T-cell (primary cell): ENCODE measurements at regions of chr3 and their contacts with region 1.

Region 1: GRCh38 chr3:122383771-122384697 is at the start of gene FAM162A:
- DNase-seq: peak; percentile 84 to 97 (median 91)
- ATAC-seq: peak; percentile 95 to 98 (median 98)
- H3K4me3 ChIP-seq: peak within 1 kb of the TSS; percentile 90 to 94
- H3K4me3 Mint-ChIP-seq: peak within 1 kb of the TSS; percentile 91 to 92 (median 92)
- H3K27ac ChIP-seq: peak within 1 kb of the TSS; percentile 82
- H3K27ac Mint-ChIP-seq: peak within 1 kb of the TSS; percentile 93 to 95
- H3K4me1 ChIP-seq: peaks cover 15 to 18% of the 10 kb centered on the region in 2 experiments
- H3K4me1 Mint-ChIP-seq: peaks cover 45 to 55% (median 53%) of the 10 kb centered on the region in 3 donors
- H3K27me3 ChIP-seq: no peaks in the 10 kb centered on the region
- H3K27me3 Mint-ChIP-seq: no peaks in the 10 kb centered on the region
- total RNA-seq, gene FAM162A: 26.6 to 29.6 (median 28.1) TPM

Region 2: DNA sequence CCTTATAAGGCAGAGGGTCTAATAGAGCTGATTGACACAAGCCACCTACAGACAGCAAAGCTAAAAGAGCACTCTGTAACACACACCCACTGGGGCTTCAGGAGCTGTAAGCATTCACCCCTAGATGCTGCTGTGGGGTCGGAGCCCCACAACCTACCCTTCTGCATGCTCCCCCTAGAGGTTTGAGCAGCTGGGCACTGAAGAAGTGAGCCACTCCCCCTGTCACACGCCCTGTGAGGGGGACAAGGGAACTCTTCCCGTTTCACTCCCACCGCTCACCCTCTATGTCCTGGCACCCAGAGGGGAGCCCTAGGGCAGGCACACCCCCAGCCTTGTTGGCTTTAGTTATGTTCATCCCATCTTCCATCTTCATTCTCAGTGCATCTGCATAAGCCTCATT is 68.4 kb before region 1 on chr3:
- CTCF ChIA-PET with region 1: no interaction called
- POLR2A ChIA-PET with region 1: no interaction called
- DNase-seq: no peak
- ATAC-seq: no peak
- H3K4me3 ChIP-seq: no peak overlapping the region
- H3K4me3 Mint-ChIP-seq: no peak overlapping the region
- H3K27ac ChIP-seq: no peak overlapping the region
- H3K27ac Mint-ChIP-seq: no peak overlapping the region
- H3K4me1 ChIP-seq: no peaks in the 10 kb centered on the region
- H3K4me1 Mint-ChIP-seq: peaks cover 7 to 12% (median 8%) of the 10 kb centered on the region in 3 donors
- H3K27me3 ChIP-seq: peaks cover 0 to 5% of the 10 kb centered on the region in 2 experiments
- H3K27me3 Mint-ChIP-seq: peaks cover 0 to 3% of the 10 kb centered on the region in 2 donors

Region 3: GRCh38 chr3:122343654-122344053 is 40.4 kb before region 1 on chr3:
- CTCF ChIA-PET with region 1: no interaction called
- POLR2A ChIA-PET with region 1: no interaction called
- DNase-seq: no peak
- ATAC-seq: no peak
- H3K4me3 ChIP-seq: no peak overlapping the region
- H3K4me3 Mint-ChIP-seq: no peak overlapping the region
- H3K27ac ChIP-seq: no peak overlapping the region
- H3K27ac Mint-ChIP-seq: no peak overlapping the region
- H3K4me1 ChIP-seq: no peaks in the 10 kb centered on the region
- H3K4me1 Mint-ChIP-seq: no peaks in the 10 kb centered on the region
- H3K27me3 ChIP-seq: peaks cover 0 to 9% of the 10 kb centered on the region in 2 experiments
- H3K27me3 Mint-ChIP-seq: peaks cover 4 to 6% of the 10 kb centered on the region in 2 donors

Region 4: DNA sequence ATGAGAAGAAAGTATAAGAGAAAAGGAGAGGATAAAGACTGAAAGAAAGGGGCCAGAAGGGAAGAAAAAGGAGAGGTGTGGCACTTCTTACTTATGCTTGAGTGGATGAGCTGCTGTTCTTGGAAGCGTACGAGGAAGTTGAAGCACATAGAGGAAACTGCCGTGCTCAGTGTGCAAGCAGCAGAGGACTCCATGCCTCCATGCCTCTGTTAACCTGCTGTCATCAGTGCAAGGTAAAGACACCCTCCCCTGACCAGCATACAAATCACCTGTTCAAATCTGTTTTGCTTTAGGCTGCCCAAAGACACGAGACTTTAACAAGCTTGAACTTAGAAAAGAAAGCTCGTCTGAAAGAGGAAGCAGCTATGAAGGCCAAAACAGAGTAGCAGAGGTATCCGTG is 25.4 kb after region 1 on chr3:
- CTCF ChIA-PET with region 1: interaction called, 5 to 59 read pairs
- POLR2A ChIA-PET with region 1: interaction called in 1 of 2 experiments, 5 read pairs
- DNase-seq: no peak
- ATAC-seq: no peak
- H3K4me3 ChIP-seq: no peak overlapping the region
- H3K4me3 Mint-ChIP-seq: no peak overlapping the region
- H3K27ac ChIP-seq: no peak overlapping the region
- H3K27ac Mint-ChIP-seq: peak overlapping the region; percentile 8 to 9
- H3K4me1 ChIP-seq: no peaks in the 10 kb centered on the region
- H3K4me1 Mint-ChIP-seq: peaks cover 22 to 33% (median 32%) of the 10 kb centered on the region in 3 donors
- H3K27me3 ChIP-seq: no peaks in the 10 kb centered on the region
- H3K27me3 Mint-ChIP-seq: no peaks in the 10 kb centered on the region

Region 5: DNA sequence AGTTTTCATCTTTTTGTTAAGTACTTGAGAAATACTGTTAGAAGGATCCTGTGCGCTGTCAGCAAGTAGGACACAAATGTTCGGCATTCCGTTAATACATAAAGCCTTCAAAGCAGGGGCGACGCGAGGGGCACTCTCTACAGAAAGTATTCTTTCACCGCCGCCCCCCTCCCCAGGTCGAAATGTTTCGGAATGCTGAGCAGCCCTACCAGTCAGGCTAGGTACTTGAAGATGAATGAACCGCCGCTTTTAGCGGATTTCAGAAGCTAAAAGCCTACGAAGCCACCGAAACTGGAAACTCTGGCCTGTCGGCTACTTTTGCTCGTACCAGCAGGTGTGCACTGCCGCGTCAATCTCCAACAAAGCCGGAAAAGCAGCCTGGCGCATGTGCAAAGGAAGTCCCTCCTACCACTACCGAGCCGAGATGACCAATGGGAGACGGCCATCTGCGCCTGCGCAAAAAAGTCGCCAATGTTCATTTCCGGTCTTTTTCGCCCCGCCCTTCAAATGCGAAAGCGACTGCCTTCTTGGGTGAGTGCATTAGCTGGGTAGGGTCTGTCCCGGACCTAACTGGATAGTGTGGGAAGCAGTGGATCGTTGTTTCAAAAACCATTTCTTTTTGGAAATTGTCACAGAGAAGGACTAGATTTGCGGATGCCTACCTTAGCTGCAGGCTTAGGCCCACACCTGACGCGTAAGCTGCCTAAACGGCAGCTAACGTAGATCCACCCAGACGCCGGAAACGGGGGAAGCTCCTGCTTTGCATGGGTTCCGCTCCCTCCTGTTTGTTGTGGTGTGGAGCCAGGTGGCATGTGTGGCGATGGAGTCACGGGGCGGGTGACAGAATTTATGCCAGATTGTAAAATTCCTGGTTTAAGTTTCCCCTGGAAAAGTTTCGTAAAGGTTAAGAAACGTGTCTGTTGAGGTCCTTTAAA is 32.0 kb after region 1 on chr3 and contains the start of gene WDR5B:
- CTCF ChIA-PET with region 1: interaction called, 3 to 59 read pairs
- POLR2A ChIA-PET with region 1: interaction called, 13 to 14 read pairs
- DNase-seq: peak; percentile 91 to 100 (median 97)
- ATAC-seq: peak; percentile 91 to 93 (median 92)
- H3K4me3 ChIP-seq: peak within 1 kb of the TSS; percentile 65 to 86
- H3K4me3 Mint-ChIP-seq: peak within 1 kb of the TSS; percentile 95 to 99 (median 99)
- H3K27ac ChIP-seq: peak within 1 kb of the TSS; percentile 82
- H3K27ac Mint-ChIP-seq: peak within 1 kb of the TSS; percentile 100
- H3K4me1 ChIP-seq: peaks cover 14 to 15% of the 10 kb centered on the region in 2 experiments
- H3K4me1 Mint-ChIP-seq: peaks cover 45 to 66% (median 61%) of the 10 kb centered on the region in 3 donors
- H3K27me3 ChIP-seq: no peaks in the 10 kb centered on the region
- H3K27me3 Mint-ChIP-seq: no peaks in the 10 kb centered on the region
- total RNA-seq, gene WDR5B: 5.8 to 11.6 (median 10.0) TPM

Region 6: DNA sequence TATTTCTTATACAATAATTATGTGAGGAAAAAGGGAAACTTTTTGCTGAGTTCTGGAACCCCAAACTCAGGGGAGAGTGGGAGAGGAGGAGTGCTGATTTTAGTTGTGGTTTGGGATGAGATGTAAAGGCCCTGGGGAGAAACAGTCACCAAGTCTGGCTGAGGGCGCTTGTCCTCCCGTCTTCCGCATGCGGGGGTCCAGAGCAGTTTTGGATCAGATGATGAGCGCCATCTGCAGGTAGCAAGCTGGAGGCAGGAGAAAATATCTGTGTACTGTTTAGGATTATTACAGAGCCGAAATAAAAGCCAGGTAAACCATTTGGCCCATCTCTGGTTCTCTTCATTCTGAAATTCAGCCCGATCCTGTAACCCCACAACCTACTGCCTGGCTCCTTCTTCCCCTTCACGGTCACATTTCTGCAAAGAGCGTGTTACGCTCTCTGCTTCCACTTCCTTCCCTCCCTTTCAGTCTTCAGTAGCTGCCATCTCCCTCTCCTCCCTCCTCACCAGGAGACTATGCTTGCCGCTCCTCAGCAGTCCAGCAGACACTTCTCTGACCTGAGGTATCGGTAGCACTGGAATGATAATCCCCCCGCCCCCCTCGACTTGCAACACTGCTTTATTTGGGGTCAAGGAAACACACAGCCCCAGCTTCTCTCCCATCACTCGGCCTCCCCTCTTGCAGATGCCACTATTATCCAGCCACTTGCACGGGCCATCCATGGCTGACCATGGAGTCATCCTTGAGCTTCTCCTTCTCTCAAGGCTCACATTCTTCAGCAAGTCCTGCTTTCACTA is 295.2 kb after region 1 on chr3:
- CTCF ChIA-PET with region 1: interaction called, 3 to 13 read pairs
- POLR2A ChIA-PET with region 1: no interaction called
- DNase-seq: peak; percentile 64 to 93 (median 78)
- ATAC-seq: peak; percentile 63 to 71 (median 67)
- H3K4me3 ChIP-seq: peak overlapping the region in 1 of 2 donors; percentile 96
- H3K4me3 Mint-ChIP-seq: peak overlapping the region; percentile 93 to 97 (median 94)
- H3K27ac ChIP-seq: peak overlapping the region; percentile 96
- H3K27ac Mint-ChIP-seq: peak overlapping the region; percentile 99 to 100
- H3K4me1 ChIP-seq: peaks cover 12 to 35% of the 10 kb centered on the region in 2 experiments
- H3K4me1 Mint-ChIP-seq: peaks cover 55 to 56% (median 56%) of the 10 kb centered on the region in 3 donors
- H3K27me3 ChIP-seq: no peaks in the 10 kb centered on the region
- H3K27me3 Mint-ChIP-seq: no peaks in the 10 kb centered on the region